CD4-positive, alpha-beta T cell (primary cell): ENCODE measurements at regions of chr19 and their contacts with region 1.

Region 1: DNA sequence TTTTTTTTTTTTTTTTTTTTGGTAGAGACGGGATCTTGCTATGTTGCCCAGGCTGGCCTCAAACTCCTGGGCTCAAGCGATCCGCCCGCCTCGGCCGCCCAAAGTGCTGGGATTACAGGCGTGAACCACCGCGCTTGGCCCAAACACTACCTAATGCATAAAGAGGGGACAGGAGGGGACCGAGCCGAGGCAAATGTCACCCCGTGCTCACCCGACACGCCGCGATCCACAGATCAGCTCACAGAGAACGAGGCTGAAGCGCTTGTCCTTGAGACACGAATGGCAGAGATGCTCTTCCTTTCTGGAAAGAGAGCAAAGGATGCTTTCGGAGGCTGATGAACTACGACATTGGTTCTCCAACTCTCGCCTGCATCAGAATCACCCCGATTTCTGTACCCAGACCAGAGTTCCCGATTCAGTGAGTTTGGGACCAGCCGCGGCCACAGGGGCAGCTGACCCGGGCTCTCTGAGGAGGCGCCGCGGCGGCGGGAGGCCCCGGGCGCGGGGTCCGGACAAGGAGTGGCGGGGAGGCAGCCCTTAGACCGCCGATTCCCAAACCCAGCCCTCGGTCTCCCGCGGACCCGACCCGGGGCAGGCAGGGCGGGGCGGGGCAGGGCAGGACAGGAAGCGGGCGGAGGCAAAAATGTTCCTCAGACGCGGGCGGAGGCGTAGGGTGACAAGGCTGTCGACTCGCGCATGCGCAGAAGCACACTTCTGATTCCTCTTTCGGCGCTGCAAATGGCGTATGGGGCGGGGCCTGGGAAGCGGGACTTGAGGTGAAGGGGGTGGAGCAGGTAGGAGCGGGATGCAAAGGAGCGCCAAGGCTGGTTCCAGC is at the start of gene ZNF699:
- DNase-seq: peak; percentile 95 to 99 (median 98)
- ATAC-seq: peak; percentile 94
- H3K4me3 ChIP-seq: peak within 1 kb of the TSS; percentile 94
- H3K4me3 Mint-ChIP-seq: peak within 1 kb of the TSS; percentile 95
- H3K27ac ChIP-seq: peak within 1 kb of the TSS; percentile 74 to 87
- H3K27ac Mint-ChIP-seq: peak within 1 kb of the TSS; percentile 94
- H3K4me1 ChIP-seq: peaks cover 27% of the 10 kb centered on the region
- H3K4me1 Mint-ChIP-seq: peaks cover 34% of the 10 kb centered on the region
- H3K27me3 ChIP-seq: no peaks in the 10 kb centered on the region
- H3K27me3 Mint-ChIP-seq: no peaks in the 10 kb centered on the region
- CTCF ChIP-seq: no peak
- total RNA-seq, gene ZNF699: 13.4 to 14.2 TPM

Region 2: GRCh38 chr19:8832132-8833021 is 477.0 kb before region 1 on chr19 and contains the starts of genes MBD3L1 and ZNF558:
- CTCF ChIA-PET with region 1: no interaction called
- POLR2A ChIA-PET with region 1: no interaction called
- intact Hi-C with region 1: loop called in 1 of 2 experiments (anchors 10 kb)
- DNase-seq: peak; percentile 95 to 100 (median 99)
- ATAC-seq: peak; percentile 88
- H3K4me3 ChIP-seq: peak within 1 kb of the TSS; percentile 90
- H3K4me3 Mint-ChIP-seq: peak within 1 kb of the TSS; percentile 97
- H3K27ac ChIP-seq: peak within 1 kb of the TSS; percentile 89 to 92
- H3K27ac Mint-ChIP-seq: peak within 1 kb of the TSS; percentile 95
- H3K4me1 ChIP-seq: peaks cover 15% of the 10 kb centered on the region
- H3K4me1 Mint-ChIP-seq: peaks cover 31% of the 10 kb centered on the region
- H3K27me3 ChIP-seq: no peaks in the 10 kb centered on the region
- H3K27me3 Mint-ChIP-seq: no peaks in the 10 kb centered on the region
- CTCF ChIP-seq: peak; percentile 48
- total RNA-seq, gene MBD3L1: not detected
- total RNA-seq, gene ZNF558: 22.2 to 23.3 TPM

Region 3: DNA sequence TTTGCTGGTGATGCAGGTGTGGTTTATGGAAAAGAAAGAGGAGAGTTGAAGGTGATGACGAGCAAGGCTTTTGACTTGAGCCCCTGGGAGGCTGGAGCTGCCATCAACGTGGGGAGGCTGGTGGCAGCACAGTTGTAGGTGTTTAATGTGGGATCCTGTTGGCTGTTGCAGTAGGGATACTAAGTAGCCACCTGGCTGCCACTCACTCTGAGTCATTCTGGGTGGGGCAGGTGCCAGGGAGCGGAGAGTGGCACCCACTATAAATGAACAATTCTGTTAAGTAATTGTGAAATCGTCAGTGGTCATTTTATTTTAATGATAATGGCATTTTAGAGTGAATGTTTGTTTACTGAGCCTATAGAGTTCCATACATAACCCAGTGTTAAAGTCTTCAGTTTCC is 159.4 kb before region 1 on chr19:
- CTCF ChIA-PET with region 1: no interaction called
- POLR2A ChIA-PET with region 1: no interaction called
- intact Hi-C with region 1: no loop called
- DNase-seq: no peak
- ATAC-seq: no peak
- H3K4me3 ChIP-seq: no peak overlapping the region
- H3K4me3 Mint-ChIP-seq: no peak overlapping the region
- H3K27ac ChIP-seq: no peak overlapping the region
- H3K27ac Mint-ChIP-seq: no peak overlapping the region
- H3K4me1 ChIP-seq: peaks cover 22% of the 10 kb centered on the region
- H3K4me1 Mint-ChIP-seq: peaks cover 80% of the 10 kb centered on the region
- H3K27me3 ChIP-seq: no peaks in the 10 kb centered on the region
- H3K27me3 Mint-ChIP-seq: no peaks in the 10 kb centered on the region
- CTCF ChIP-seq: no peak

Region 4: DNA sequence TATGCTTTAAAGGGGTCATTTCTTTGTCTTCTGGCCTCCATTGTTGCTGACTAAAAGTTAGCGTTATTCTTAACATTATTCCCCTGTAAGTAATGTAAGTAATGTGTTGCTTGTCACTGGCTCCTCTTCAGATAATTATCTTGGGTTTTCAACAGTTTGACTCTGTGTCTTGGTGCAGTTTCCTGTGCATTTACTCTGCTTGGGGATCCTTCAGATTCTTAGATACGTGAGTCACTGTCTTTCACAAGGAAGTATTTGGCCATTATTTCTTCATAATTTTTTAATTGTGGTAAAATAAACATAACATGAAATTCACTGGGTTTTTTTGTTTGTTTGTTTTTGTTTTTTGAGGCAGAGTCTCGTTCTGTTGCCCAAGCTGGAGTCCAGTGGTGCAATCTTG is 144.1 kb before region 1 on chr19:
- CTCF ChIA-PET with region 1: no interaction called
- POLR2A ChIA-PET with region 1: no interaction called
- intact Hi-C with region 1: no loop called
- DNase-seq: no peak
- ATAC-seq: no peak
- H3K4me3 ChIP-seq: no peak overlapping the region
- H3K4me3 Mint-ChIP-seq: no peak overlapping the region
- H3K27ac ChIP-seq: no peak overlapping the region
- H3K27ac Mint-ChIP-seq: no peak overlapping the region
- H3K4me1 ChIP-seq: no peaks in the 10 kb centered on the region
- H3K4me1 Mint-ChIP-seq: no peaks in the 10 kb centered on the region
- H3K27me3 ChIP-seq: no peaks in the 10 kb centered on the region
- H3K27me3 Mint-ChIP-seq: no peaks in the 10 kb centered on the region
- CTCF ChIP-seq: no peak

Region 5: GRCh38 chr19:9323919-9324583 is 14.7 kb after region 1 on chr19 and contains the start of gene ZNF559:
- CTCF ChIA-PET with region 1: interaction called, 18 read pairs
- POLR2A ChIA-PET with region 1: interaction called, 23 read pairs
- intact Hi-C with region 1: loop called (anchors 1 kb)
- DNase-seq: peak; percentile 94 to 98 (median 97)
- ATAC-seq: peak; percentile 97
- H3K4me3 ChIP-seq: peak within 1 kb of the TSS; percentile 87
- H3K4me3 Mint-ChIP-seq: peak within 1 kb of the TSS; percentile 96
- H3K27ac ChIP-seq: peak within 1 kb of the TSS; percentile 80 to 83
- H3K27ac Mint-ChIP-seq: peak within 1 kb of the TSS; percentile 90
- H3K4me1 ChIP-seq: peaks cover 25% of the 10 kb centered on the region
- H3K4me1 Mint-ChIP-seq: peaks cover 33% of the 10 kb centered on the region
- H3K27me3 ChIP-seq: no peaks in the 10 kb centered on the region
- H3K27me3 Mint-ChIP-seq: no peaks in the 10 kb centered on the region
- CTCF ChIP-seq: peak; percentile 65
- total RNA-seq, gene ZNF559: 4.7 to 6.5 TPM

Region 6: GRCh38 chr19:9342610-9343304 is 33.4 kb after region 1 on chr19:
- CTCF ChIA-PET with region 1: no interaction called
- POLR2A ChIA-PET with region 1: no interaction called
- intact Hi-C with region 1: loop called in 1 of 2 experiments (anchors 5 kb)
- DNase-seq: no peak
- ATAC-seq: no peak
- H3K4me3 ChIP-seq: no peak overlapping the region
- H3K4me3 Mint-ChIP-seq: no peak overlapping the region
- H3K27ac ChIP-seq: no peak overlapping the region
- H3K27ac Mint-ChIP-seq: no peak overlapping the region
- H3K4me1 ChIP-seq: no peaks in the 10 kb centered on the region
- H3K4me1 Mint-ChIP-seq: no peaks in the 10 kb centered on the region
- H3K27me3 ChIP-seq: no peaks in the 10 kb centered on the region
- H3K27me3 Mint-ChIP-seq: no peaks in the 10 kb centered on the region
- CTCF ChIP-seq: no peak

Region 7: DNA sequence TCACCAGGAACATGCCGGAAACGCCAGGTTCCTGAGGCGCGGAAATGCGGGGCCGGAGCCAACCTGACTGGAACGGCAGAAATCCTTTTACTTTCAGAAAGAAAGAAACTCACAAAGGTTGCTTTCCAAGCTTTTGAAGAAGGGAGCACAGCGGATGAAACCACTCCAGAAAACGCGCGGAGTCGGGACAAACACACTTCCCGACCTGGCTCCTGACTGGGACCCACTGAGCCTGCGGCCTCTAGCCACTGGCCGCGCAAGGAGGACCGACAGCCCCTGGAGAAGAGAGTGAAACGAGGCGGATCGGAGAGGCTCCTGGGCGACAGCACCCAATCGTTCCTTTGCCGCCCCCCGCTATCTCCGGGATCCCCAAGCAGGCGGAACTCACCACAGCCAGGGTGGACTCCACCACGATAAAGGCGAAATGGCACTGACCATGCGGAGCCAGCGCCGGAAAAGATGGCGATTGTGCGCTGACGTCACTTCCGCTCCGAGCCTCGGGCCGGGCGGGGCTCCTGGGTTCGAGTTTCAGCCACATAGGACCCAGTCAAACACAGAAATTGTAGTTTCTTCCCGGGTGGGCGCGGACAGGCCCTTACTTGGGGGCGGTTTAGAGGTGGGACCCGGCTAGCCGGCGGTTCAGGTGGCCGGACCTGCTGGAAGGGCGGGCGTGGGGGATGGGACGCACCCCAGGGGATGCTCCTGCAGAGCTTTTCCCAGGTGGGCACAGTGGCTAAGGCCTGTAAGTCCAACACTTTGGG is 274.9 kb after region 1 on chr19 and contains the start of gene ZNF121:
- CTCF ChIA-PET with region 1: interaction called, 4 read pairs
- POLR2A ChIA-PET with region 1: interaction called, 4 read pairs
- intact Hi-C with region 1: loop called in 1 of 2 experiments (anchors 5 kb)
- DNase-seq: peak; percentile 53 to 88 (median 68)
- ATAC-seq: peak; percentile 70
- H3K4me3 ChIP-seq: peak within 1 kb of the TSS; percentile 82
- H3K4me3 Mint-ChIP-seq: peak within 1 kb of the TSS; percentile 98
- H3K27ac ChIP-seq: peak within 1 kb of the TSS; percentile 92 to 93
- H3K27ac Mint-ChIP-seq: peak within 1 kb of the TSS; percentile 98
- H3K4me1 ChIP-seq: peaks cover 23% of the 10 kb centered on the region
- H3K4me1 Mint-ChIP-seq: peaks cover 36% of the 10 kb centered on the region
- H3K27me3 ChIP-seq: no peaks in the 10 kb centered on the region
- H3K27me3 Mint-ChIP-seq: peaks cover 5% of the 10 kb centered on the region
- CTCF ChIP-seq: no peak
- total RNA-seq, gene ZNF121: 42.0 to 42.1 TPM

Region 8: DNA sequence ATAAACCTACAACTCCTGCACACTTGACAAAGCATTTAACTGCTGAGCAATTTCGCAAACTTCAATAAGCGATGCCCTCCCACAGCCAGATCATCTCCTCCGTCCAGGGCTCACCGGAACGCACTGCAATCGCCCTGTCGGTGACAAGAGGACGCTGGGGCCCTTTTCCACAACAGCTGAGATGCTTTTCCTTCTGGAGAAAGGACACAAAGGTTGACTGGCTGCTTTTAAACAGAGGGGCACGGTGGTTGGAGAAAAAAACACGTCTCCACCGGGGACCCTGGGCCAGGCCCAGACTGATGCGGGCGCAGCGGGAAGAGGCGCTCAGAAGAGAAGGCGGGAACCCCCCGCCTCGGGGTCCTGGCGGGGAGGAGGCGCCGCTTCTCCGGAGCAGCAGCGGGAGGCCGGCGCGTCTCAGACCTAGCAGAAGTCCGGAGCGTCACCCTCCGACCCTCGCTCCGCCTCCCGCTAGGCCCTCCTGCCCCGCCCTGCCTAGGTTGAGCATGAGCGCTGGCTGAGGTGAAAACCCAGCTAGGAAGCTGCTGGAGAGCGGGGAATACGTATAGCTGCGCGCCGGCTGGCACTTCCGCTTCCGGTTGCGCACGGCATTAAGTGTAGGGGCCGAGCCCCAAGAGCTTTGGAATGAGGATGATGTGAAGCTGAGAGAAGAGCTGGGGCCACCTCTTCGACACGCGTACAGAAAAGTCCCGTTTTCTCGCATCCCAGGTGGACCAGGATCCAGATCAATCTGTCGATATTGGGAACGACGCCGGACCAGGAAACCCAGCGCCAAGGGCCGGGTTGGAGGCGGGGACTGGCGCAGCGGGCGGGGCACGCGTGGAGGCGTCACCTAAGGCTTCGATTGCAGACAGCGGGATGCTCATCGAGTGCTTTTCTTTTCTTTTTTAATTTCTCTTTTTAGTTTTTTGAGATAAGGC is 459.1 kb after region 1 on chr19 and contains the start of gene ZNF846:
- CTCF ChIA-PET with region 1: no interaction called
- POLR2A ChIA-PET with region 1: no interaction called
- intact Hi-C with region 1: loop called in 1 of 2 experiments (anchors 1 kb)
- DNase-seq: peak; percentile 88 to 96 (median 90)
- ATAC-seq: peak; percentile 96
- H3K4me3 ChIP-seq: peak within 1 kb of the TSS; percentile 69
- H3K4me3 Mint-ChIP-seq: peak within 1 kb of the TSS; percentile 94
- H3K27ac ChIP-seq: peak within 1 kb of the TSS; percentile 93 to 94
- H3K27ac Mint-ChIP-seq: peak within 1 kb of the TSS; percentile 97
- H3K4me1 ChIP-seq: peaks cover 23% of the 10 kb centered on the region
- H3K4me1 Mint-ChIP-seq: peaks cover 12% of the 10 kb centered on the region
- H3K27me3 ChIP-seq: no peaks in the 10 kb centered on the region
- H3K27me3 Mint-ChIP-seq: no peaks in the 10 kb centered on the region
- CTCF ChIP-seq: no peak
- total RNA-seq, gene ZNF846: 7.9 to 8.5 TPM